ENCODE measurements at regions of chr3 and their contacts with region 1.

Region 1: GRCh38 chr3:126267226-126267975 is 87.0 kb upstream of the ALDH1L1 start:
- DNase-seq: peak; percentile 89
- H3K4me3 ChIP-seq: peak overlapping the region in 1 of 3 experiments; percentile 14
- H3K27ac ChIP-seq: peak overlapping the region; percentile 22
- H3K4me1 ChIP-seq: peaks cover 15% of the 10 kb centered on the region
- H3K27me3 ChIP-seq: no peaks in the 10 kb centered on the region
- CTCF ChIP-seq: peak; percentile 6 to 38
- POLR2A ChIP-seq: no peak

Region 2: GRCh38 chr3:126287536-126288241 is 20.3 kb after region 1 on chr3:
- CTCF ChIA-PET with region 1: interaction called, 4 read pairs
- POLR2A ChIA-PET with region 1: no interaction called
- dilution Hi-C with region 1: no loop called
- intact Hi-C with region 1: loop called (anchors 2 kb)
- DNase-seq: peak; percentile 46
- H3K4me3 ChIP-seq: peak overlapping the region; percentile 8 to 34 (median 28)
- H3K27ac ChIP-seq: no peak overlapping the region
- H3K4me1 ChIP-seq: peaks cover 26% of the 10 kb centered on the region
- H3K27me3 ChIP-seq: peaks cover 2 to 4% of the 10 kb centered on the region in 2 experiments
- CTCF ChIP-seq: no peak
- POLR2A ChIP-seq: peak; percentile 12

Region 3: DNA sequence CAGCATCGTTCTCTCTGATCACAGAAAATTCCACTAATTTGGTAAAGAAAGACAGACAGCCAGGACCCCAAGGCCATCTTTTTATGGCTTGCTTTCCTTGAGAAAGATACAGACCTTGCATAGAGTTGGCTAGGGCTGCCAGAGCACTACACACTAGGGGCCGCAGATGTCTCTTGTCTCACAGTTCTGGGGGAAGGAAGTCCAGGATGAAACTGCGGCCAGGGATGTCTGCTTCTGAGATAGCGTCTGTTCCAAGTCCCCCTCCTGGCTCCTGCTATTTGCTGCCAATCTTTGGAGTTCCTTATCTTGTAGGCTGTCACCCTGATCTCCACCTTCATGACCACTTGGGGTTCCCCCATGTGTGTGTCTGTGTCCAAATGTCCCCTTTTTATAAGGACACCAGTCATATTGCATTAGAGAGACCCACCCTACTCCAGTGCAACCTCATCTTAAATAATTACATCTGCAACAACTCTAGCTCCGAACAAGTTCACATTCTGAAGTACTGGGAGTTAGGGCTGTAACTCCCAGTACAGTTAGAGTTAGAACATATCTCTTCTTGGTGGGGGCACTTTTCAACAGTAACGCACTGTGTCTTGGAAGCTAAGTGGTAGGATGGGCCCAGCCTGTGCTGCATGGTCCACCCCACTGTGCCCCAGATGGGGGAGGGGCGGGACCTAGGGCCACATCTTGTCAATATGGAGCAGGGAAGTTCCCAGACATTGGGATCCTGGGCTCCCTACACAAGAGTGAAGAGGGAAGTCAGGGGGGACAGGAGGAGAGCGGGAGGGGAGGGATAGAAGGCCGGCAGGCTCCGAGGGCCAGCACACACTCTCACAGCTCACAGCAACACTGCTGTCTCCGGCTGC is 47.6 kb after region 1 on chr3:
- CTCF ChIA-PET with region 1: no interaction called
- POLR2A ChIA-PET with region 1: no interaction called
- dilution Hi-C with region 1: no loop called
- intact Hi-C with region 1: no loop called
- DNase-seq: no peak
- H3K4me3 ChIP-seq: no peak overlapping the region
- H3K27ac ChIP-seq: no peak overlapping the region
- H3K4me1 ChIP-seq: no peaks in the 10 kb centered on the region
- H3K27me3 ChIP-seq: no peaks in the 10 kb centered on the region
- CTCF ChIP-seq: no peak
- POLR2A ChIP-seq: no peak

Measured in endothelial cell of umbilical vein (primary cell).